ENCODE measurements at regions of chr12 and their contacts with region 1.

Region 1: DNA sequence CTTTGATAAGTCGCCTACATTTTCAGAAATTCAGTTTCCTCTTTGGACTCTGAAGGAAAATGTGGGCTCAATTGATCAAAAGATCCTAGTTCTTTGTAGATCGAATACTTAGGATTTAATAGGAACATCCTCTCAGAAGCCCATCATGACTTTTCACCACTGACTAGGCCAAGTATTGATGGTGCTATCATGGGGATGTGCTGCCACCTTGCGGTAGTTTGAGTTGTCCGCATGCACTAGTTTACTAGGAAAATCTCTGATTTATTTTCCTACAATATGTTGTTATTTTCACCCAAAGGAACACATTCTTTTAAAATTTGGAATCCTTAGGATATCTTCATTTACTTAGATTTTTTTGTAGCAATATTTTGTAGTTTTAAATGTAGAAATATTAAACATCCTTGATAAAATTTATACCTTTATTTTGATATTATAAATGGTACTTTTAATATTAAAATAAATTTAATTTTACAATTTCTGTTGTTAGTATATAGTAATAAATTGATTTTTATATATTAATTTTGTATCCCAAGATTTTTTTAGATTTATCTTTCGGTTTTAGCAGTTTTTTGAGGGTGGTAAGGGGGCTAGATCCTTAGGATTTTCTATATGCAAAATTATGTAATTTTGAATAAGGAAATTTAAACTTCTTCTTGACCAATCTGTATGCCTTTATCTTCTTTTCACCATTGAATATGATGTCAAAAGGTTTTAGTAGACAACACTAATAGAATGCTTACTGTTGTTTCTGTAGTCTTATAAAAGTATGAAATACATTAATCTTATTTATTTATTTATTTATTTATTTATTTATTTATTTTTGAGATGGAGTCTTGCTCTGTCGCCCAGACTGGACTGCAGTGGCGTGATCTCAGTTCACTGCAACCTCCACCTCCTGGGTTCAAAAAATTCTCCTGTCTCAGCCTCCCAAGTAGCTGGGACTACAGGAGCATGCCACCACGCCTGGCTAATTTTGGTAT is 52.9 kb upstream of the OR9K2 start:
- DNase-seq: peak; percentile 89
- ATAC-seq: peak; percentile 61
- H3K4me3 Mint-ChIP-seq: no peak overlapping the region
- H3K27ac Mint-ChIP-seq: no peak overlapping the region
- H3K4me1 Mint-ChIP-seq: peaks cover 4% of the 10 kb centered on the region
- H3K27me3 Mint-ChIP-seq: peaks cover 20% of the 10 kb centered on the region

Region 2: GRCh38 chr12:54658306-54659264 is 414.7 kb before region 1 on chr12:
- CTCF ChIA-PET with region 1: interaction called, 10 read pairs
- POLR2A ChIA-PET with region 1: no interaction called
- intact Hi-C with region 1: no loop called
- DNase-seq: peak; percentile 73
- ATAC-seq: peak; percentile 78
- H3K4me3 Mint-ChIP-seq: no peak overlapping the region
- H3K27ac Mint-ChIP-seq: no peak overlapping the region
- H3K4me1 Mint-ChIP-seq: no peaks in the 10 kb centered on the region
- H3K27me3 Mint-ChIP-seq: peaks cover 16% of the 10 kb centered on the region

Region 3: GRCh38 chr12:54749191-54749818 is 324.0 kb before region 1 on chr12:
- CTCF ChIA-PET with region 1: interaction called, 197 read pairs
- POLR2A ChIA-PET with region 1: interaction called, 4 read pairs
- intact Hi-C with region 1: loop called (anchors 1 kb)
- DNase-seq: peak; percentile 46
- ATAC-seq: peak; percentile 71
- H3K4me3 Mint-ChIP-seq: no peak overlapping the region
- H3K27ac Mint-ChIP-seq: no peak overlapping the region
- H3K4me1 Mint-ChIP-seq: peaks cover 18% of the 10 kb centered on the region
- H3K27me3 Mint-ChIP-seq: peaks cover 2% of the 10 kb centered on the region

Region 4: DNA sequence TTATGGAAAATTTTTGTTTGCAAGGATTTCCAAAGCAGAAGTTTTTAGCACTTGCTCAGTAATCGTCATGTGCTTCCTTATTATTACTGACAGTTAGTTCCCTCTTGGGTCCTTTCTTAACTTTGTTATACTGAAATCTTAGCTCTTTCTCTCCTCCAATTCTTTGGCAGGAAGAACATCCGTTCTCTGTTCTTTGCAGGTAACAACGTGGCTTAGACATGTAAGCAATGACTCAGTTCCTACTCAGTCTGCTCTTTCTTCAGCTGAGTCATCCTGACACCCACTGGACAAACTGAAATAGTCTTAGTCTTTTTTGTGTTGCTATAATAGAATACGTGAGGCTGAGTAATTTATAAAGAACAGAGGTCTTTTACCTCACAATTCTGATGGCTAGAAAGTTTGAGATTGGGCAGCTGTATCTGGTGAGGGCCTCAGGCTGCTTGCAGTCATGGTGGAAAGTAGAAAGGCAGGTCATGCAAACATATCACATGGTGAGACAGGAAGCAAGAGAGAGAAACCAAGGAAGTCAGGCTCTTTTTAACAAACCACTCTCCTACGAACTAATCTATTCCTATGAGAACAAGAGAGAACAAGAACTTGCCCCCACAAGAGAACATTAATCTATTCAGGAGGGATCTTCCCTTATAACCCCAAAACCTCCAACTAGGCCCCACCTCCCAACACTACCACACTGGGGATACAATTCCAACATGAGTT is 137.9 kb before region 1 on chr12:
- CTCF ChIA-PET with region 1: interaction called, 12 read pairs
- POLR2A ChIA-PET with region 1: no interaction called
- intact Hi-C with region 1: no loop called
- DNase-seq: peak; percentile 62
- ATAC-seq: peak; percentile 92
- H3K4me3 Mint-ChIP-seq: peak overlapping the region; percentile 45
- H3K27ac Mint-ChIP-seq: peak overlapping the region; percentile 96
- H3K4me1 Mint-ChIP-seq: peaks cover 69% of the 10 kb centered on the region
- H3K27me3 Mint-ChIP-seq: no peaks in the 10 kb centered on the region

Region 5: GRCh38 chr12:54977155-54977554 is 96.2 kb before region 1 on chr12:
- CTCF ChIA-PET with region 1: interaction called, 30 read pairs
- POLR2A ChIA-PET with region 1: no interaction called
- intact Hi-C with region 1: no loop called
- DNase-seq: no peak
- ATAC-seq: no peak
- H3K4me3 Mint-ChIP-seq: peak overlapping the region; percentile 78
- H3K27ac Mint-ChIP-seq: peak overlapping the region; percentile 82
- H3K4me1 Mint-ChIP-seq: peaks cover 88% of the 10 kb centered on the region
- H3K27me3 Mint-ChIP-seq: no peaks in the 10 kb centered on the region

Region 6: DNA sequence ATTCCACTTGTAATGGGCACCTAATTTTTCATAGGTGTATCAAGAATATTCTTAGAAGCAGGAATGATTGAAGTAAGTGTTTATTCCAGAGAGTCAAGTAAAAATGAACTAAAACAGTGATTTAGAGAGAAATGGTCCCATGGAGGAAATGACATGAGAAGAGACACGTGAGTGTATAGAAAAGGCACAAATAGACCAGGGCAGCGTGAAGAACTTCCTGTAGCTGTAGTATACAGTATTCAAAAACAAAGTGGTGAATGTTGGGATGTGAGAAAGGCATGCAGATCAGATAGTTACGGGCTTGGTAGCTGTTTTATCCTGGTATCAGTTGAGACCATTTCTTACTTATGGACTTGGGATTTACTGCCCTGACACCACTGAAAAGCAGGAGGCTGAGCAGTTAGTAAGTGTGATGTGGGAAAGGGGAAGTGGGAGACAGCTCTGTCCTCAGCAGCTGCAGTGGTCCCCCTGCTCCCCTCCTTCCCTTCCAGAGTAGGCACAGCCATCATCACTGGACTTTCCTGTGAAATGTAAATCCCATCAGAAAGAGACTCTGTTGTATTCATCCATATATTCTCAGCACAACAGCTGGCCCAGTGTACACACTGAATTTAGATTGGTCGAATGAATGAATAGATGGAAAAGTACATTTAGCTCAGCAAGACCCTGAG is 72.0 kb before region 1 on chr12:
- CTCF ChIA-PET with region 1: interaction called, 463 read pairs
- POLR2A ChIA-PET with region 1: no interaction called
- intact Hi-C with region 1: no loop called
- DNase-seq: no peak
- ATAC-seq: no peak
- H3K4me3 Mint-ChIP-seq: no peak overlapping the region
- H3K27ac Mint-ChIP-seq: peak overlapping the region; percentile 42
- H3K4me1 Mint-ChIP-seq: peaks cover 14% of the 10 kb centered on the region
- H3K27me3 Mint-ChIP-seq: no peaks in the 10 kb centered on the region

Region 7: GRCh38 chr12:55043542-55043941 is 29.8 kb before region 1 on chr12:
- CTCF ChIA-PET with region 1: interaction called, 16 read pairs
- POLR2A ChIA-PET with region 1: no interaction called
- intact Hi-C with region 1: no loop called
- DNase-seq: no peak
- ATAC-seq: no peak
- H3K4me3 Mint-ChIP-seq: no peak overlapping the region
- H3K27ac Mint-ChIP-seq: no peak overlapping the region
- H3K4me1 Mint-ChIP-seq: peaks cover 6% of the 10 kb centered on the region
- H3K27me3 Mint-ChIP-seq: peaks cover 3% of the 10 kb centered on the region